ENCODE measurements at regions of chr2 and their contacts with region 1.

Region 1: DNA sequence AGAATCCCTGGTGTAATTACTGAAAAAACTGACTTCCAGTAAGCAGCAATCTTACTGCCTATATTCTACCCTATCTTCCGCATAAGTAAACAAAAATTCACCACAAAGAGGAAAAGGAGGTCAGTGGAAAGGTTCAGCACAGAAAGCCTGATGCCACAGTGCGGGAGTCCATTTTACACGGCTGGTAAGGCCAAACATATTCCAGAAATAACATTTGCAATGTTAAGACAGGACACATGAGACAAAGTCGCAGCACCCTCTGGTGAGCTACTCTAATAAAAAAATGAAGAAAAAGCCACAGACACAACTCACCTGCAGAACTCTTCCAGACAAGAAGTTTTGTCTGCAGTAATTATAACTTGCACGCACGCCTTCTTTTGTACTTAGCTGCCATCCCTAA is 40.6 kb downstream of the GEMIN6 start:
- DNase-seq: no peak
- H3K4me3 ChIP-seq: no peak overlapping the region
- H3K4me3 Mint-ChIP-seq: no peak overlapping the region
- H3K27ac Mint-ChIP-seq: no peak overlapping the region
- H3K4me1 ChIP-seq: no peaks in the 10 kb centered on the region
- H3K4me1 Mint-ChIP-seq: no peaks in the 10 kb centered on the region
- H3K27me3 ChIP-seq: no peaks in the 10 kb centered on the region
- H3K27me3 Mint-ChIP-seq: no peaks in the 10 kb centered on the region
- CTCF ChIP-seq: no peak

Region 2: GRCh38 chr2:38771632-38772031 is 46.9 kb before region 1 on chr2:
- CTCF ChIA-PET with region 1: no interaction called
- POLR2A ChIA-PET with region 1: no interaction called
- intact Hi-C with region 1: no loop called
- DNase-seq: no peak
- H3K4me3 ChIP-seq: no peak overlapping the region
- H3K4me3 Mint-ChIP-seq: no peak overlapping the region
- H3K27ac Mint-ChIP-seq: no peak overlapping the region
- H3K4me1 ChIP-seq: peaks cover 12% of the 10 kb centered on the region; the same call in 1 of the 2 replicates
- H3K4me1 Mint-ChIP-seq: peaks cover 8% of the 10 kb centered on the region
- H3K27me3 ChIP-seq: no peaks in the 10 kb centered on the region
- H3K27me3 Mint-ChIP-seq: no peaks in the 10 kb centered on the region
- CTCF ChIP-seq: no peak

Region 3: DNA sequence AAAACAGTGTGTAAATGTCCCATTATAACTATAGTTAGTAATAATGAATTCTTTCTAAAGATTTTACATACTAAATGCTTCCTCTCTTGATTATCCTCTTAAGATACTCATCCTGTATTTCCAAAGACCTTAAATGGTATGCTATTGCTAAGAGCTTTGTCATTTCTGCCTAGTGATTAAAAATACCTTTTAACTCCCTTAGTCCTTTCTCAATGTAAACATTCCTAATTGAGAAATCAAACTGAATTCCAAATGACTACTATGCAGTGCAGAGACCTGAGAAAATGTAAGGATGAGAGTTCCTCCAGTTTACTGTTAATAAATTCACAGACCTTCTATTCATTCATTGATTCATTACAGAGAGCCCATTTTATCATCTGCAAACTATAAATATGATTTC is 215.4 kb after region 1 on chr2:
- CTCF ChIA-PET with region 1: no interaction called
- POLR2A ChIA-PET with region 1: interaction called, 14 read pairs
- intact Hi-C with region 1: no loop called
- DNase-seq: no peak
- H3K4me3 ChIP-seq: no peak overlapping the region
- H3K4me3 Mint-ChIP-seq: no peak overlapping the region
- H3K27ac Mint-ChIP-seq: no peak overlapping the region
- H3K4me1 ChIP-seq: peaks cover 12% of the 10 kb centered on the region
- H3K4me1 Mint-ChIP-seq: peaks cover 10% of the 10 kb centered on the region
- H3K27me3 ChIP-seq: no peaks in the 10 kb centered on the region
- H3K27me3 Mint-ChIP-seq: no peaks in the 10 kb centered on the region
- CTCF ChIP-seq: no peak

Measured in Caco-2 (cell line).